Activated CD8-positive, alpha-beta memory T cell treated with anti-CD3 and anti-CD28 coated beads, Interleukin-2, amount 10 ng/mL, durations not matched to agents 7 days and 5 days (primary cell): ENCODE measurements at regions of chrX and their contacts with region 1.

Region 1: GRCh38 chrX:45769761-45770582 is 569.3 kb upstream of the DIPK2B start:
- DNase-seq: peak; percentile 76
- ATAC-seq: peak; percentile 77
- H3K4me3 Mint-ChIP-seq: peak overlapping the region; percentile 88
- H3K27ac Mint-ChIP-seq: peak overlapping the region; percentile 94
- H3K4me1 Mint-ChIP-seq: peaks cover 49% of the 10 kb centered on the region
- H3K27me3 Mint-ChIP-seq: no peaks in the 10 kb centered on the region

Region 2: DNA sequence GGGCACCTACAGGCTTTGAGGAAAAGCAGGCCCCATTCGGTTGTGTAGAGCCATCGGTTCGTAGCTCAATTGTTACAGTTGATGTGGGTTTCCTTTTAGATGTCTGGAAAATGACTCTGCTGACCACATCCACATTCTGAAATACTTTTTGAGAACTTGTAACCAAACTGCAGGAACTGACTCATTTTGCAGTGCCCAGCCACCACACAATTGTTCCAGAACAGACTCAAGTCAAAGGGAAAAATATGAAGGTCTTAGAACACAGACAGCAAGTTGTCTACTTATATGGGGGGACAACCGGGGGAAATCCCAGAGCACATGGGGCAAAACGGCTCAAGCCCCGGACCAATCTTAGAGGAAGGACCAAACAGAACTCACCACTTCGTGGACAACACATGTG is 11.7 kb before region 1 on chrX:
- CTCF ChIA-PET with region 1: interaction called, 17 read pairs
- DNase-seq: peak; percentile 79
- ATAC-seq: peak; percentile 46
- H3K4me3 Mint-ChIP-seq: peak overlapping the region; percentile 70
- H3K27ac Mint-ChIP-seq: peak overlapping the region; percentile 95
- H3K4me1 Mint-ChIP-seq: peaks cover 66% of the 10 kb centered on the region
- H3K27me3 Mint-ChIP-seq: no peaks in the 10 kb centered on the region